ENCODE measurements at regions of chr2 and their contacts with region 1.

Region 1: GRCh38 chr2:130332271-130333073 is 10.2 kb upstream of the IMP4 start:
- DNase-seq: peak; percentile 78
- H3K4me3 ChIP-seq: no peak overlapping the region
- H3K27ac ChIP-seq: no peak overlapping the region
- H3K4me1 ChIP-seq: no peaks in the 10 kb centered on the region
- CTCF ChIP-seq: peak; percentile 98

Region 2: GRCh38 chr2:128422571-128422970 is 1909.9 kb before region 1 on chr2:
- CTCF ChIA-PET with region 1: no interaction called
- POLR2A ChIA-PET with region 1: no interaction called
- intact Hi-C with region 1: no loop called
- DNase-seq: no peak
- H3K4me3 ChIP-seq: no peak overlapping the region
- H3K27ac ChIP-seq: no peak overlapping the region
- H3K4me1 ChIP-seq: no peaks in the 10 kb centered on the region
- CTCF ChIP-seq: no peak

Region 3: DNA sequence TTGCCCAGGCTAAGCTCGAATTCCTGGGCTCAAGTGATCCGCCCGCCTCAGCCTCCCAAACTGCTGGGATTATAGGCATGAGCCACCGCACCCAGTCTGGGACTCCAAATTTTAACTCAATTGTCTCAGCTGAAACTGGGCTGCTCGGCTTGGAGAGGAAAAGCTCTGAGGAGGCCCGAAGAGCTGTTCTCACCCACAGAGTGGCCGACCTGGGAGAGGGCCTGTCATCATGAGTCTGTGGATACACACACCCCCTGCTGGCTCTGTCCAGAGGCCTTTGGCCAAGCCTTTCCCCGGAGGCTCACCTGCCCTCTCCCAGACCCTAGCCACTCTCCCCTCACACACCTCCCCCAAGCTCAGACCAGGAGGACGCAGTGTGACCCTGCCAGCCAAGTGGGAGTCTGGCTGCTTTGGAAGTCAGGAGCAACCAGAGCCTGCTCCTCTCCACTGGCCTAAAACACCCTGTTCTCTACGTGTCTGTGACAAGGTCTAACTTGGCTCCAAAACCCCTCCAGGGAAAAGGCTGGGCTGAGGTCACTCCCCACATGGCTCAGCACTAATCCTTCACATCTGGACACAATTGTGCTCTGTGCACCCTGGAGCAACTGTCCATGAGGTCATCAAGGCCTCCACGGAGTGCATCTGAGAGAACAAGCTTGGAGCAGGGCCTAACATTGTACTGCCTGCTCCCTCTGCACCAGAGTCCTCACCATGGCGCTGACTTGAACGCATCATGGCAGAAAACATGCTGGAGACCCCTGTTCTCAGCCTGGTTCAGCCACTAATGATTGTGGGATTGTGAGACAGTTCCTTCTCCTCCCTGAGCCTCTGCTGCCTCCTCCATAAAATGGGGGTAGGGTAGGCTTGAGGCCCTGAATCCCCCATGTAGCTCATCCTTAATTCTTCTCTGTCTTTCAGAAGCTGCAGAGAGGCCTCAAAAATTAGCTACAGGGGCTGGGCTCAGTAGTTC is 402.9 kb before region 1 on chr2:
- CTCF ChIA-PET with region 1: no interaction called
- POLR2A ChIA-PET with region 1: no interaction called
- intact Hi-C with region 1: no loop called
- DNase-seq: no peak
- H3K4me3 ChIP-seq: no peak overlapping the region
- H3K27ac ChIP-seq: no peak overlapping the region
- H3K4me1 ChIP-seq: no peaks in the 10 kb centered on the region
- CTCF ChIP-seq: no peak

Region 4: GRCh38 chr2:130156624-130157004 is 175.9 kb before region 1 on chr2:
- CTCF ChIA-PET with region 1: no interaction called
- POLR2A ChIA-PET with region 1: no interaction called
- intact Hi-C with region 1: loop called (anchors 2 kb)
- DNase-seq: no peak
- H3K4me3 ChIP-seq: no peak overlapping the region
- H3K27ac ChIP-seq: no peak overlapping the region
- H3K4me1 ChIP-seq: peaks cover 15% of the 10 kb centered on the region
- CTCF ChIP-seq: no peak